ENCODE measurements at regions of chr1 and their contacts with region 1.

Region 1: GRCh38 chr1:42952303-42953001 is 6.2 kb downstream of the SLC2A1 start:
- DNase-seq: peak in 1 of 5 donors; percentile 68
- H3K4me3 ChIP-seq: peak overlapping the region; percentile 49
- H3K4me3 Mint-ChIP-seq: peak overlapping the region; percentile 46 to 87 (median 64)
- H3K27ac ChIP-seq: peak overlapping the region; percentile 49
- H3K27ac Mint-ChIP-seq: peak overlapping the region; percentile 40 to 95 (median 90)
- H3K4me1 ChIP-seq: peaks cover 91% of the 10 kb centered on the region
- H3K4me1 Mint-ChIP-seq: peaks cover 81 to 94% (median 90%) of the 10 kb centered on the region in 3 donors
- H3K27me3 ChIP-seq: no peaks in the 10 kb centered on the region
- H3K27me3 Mint-ChIP-seq: no peaks in the 10 kb centered on the region

Region 2: GRCh38 chr1:42931108-42931539 is 21.3 kb before region 1 on chr1:
- CTCF ChIA-PET with region 1: interaction called, 10 read pairs
- POLR2A ChIA-PET with region 1: interaction called, 28 read pairs
- DNase-seq: peak; percentile 41 to 77 (median 72)
- H3K4me3 ChIP-seq: peak overlapping the region; percentile 30
- H3K4me3 Mint-ChIP-seq: peak overlapping the region; percentile 63 to 88 (median 81)
- H3K27ac ChIP-seq: peak overlapping the region; percentile 77
- H3K27ac Mint-ChIP-seq: peak overlapping the region; percentile 89 to 99 (median 96)
- H3K4me1 ChIP-seq: peaks cover 66% of the 10 kb centered on the region
- H3K4me1 Mint-ChIP-seq: peaks cover 68 to 74% (median 74%) of the 10 kb centered on the region in 3 donors
- H3K27me3 ChIP-seq: no peaks in the 10 kb centered on the region
- H3K27me3 Mint-ChIP-seq: peaks cover 0 to 3% of the 10 kb centered on the region in 2 donors

Region 3: GRCh38 chr1:42971841-42972291 is 19.4 kb after region 1 on chr1:
- CTCF ChIA-PET with region 1: interaction called, 4 read pairs
- POLR2A ChIA-PET with region 1: interaction called, 10 read pairs
- DNase-seq: no peak
- H3K4me3 ChIP-seq: no peak overlapping the region
- H3K4me3 Mint-ChIP-seq: no peak overlapping the region
- H3K27ac ChIP-seq: no peak overlapping the region
- H3K27ac Mint-ChIP-seq: no peak overlapping the region
- H3K4me1 ChIP-seq: no peaks in the 10 kb centered on the region
- H3K4me1 Mint-ChIP-seq: no peaks in the 10 kb centered on the region
- H3K27me3 ChIP-seq: no peaks in the 10 kb centered on the region
- H3K27me3 Mint-ChIP-seq: no peaks in the 10 kb centered on the region

Region 4: DNA sequence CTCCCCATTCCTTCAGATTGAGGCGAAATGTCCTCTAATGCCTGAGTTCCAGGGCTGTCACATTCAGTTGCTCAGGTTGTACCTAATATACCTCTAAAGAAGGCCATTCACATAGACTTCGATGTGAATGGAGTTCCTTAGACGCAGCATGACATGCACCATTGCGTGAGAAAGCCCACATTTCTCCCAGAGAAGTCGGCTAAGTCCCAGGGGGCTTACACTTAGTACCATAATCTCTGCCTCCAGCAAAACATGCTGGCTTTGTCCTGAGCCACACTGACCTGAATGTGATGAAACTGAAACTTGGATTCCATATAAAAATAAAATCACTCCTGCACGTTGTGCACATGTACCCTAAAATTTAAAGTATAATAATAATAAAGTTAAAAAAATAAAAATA is 29.4 kb after region 1 on chr1:
- CTCF ChIA-PET with region 1: no interaction called
- POLR2A ChIA-PET with region 1: no interaction called
- DNase-seq: no peak
- H3K4me3 ChIP-seq: no peak overlapping the region
- H3K4me3 Mint-ChIP-seq: no peak overlapping the region
- H3K27ac ChIP-seq: no peak overlapping the region
- H3K27ac Mint-ChIP-seq: no peak overlapping the region
- H3K4me1 ChIP-seq: no peaks in the 10 kb centered on the region
- H3K4me1 Mint-ChIP-seq: no peaks in the 10 kb centered on the region
- H3K27me3 ChIP-seq: no peaks in the 10 kb centered on the region
- H3K27me3 Mint-ChIP-seq: peaks cover 0 to 2% of the 10 kb centered on the region in 2 donors